Activated CD4-positive, alpha-beta T cell treated with anti-CD3 and anti-CD28 coated beads, Interleukin-2, amount 10 ng/mL, durations not matched to agents 7 days and 5 days (primary cell): ENCODE measurements at regions of chr14 and their contacts with region 1.

Region 1: DNA sequence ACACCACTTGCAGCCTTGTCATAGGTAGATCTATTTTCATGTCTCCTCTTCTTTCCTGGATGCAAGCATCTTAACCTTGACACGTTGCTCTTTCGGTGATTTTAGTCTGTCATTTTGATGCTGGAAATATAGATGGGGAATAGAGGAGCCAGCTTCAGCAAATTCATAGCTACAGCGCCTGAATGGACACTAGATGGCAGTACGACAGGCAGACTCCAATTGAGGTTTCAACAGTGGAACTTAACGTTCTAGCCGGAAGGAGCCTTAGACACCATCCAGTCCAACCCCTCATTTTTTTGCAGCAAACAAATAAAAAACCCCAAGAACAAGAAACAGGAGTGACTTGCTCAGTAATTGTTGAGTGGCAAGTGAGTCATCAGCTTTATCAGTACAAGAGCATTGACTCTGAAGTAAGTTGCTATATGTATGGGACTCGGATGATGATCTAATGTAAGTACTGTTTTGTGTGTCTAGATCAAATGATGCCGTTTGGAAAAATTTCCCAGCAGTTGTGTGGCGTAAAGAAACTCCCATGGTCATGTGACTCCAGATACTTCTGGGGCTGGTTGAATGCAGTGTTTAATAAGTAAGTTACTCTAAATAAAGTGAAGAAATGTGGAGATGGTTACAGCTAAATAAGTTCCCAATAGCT is 9.0 kb downstream of the DMAC2L start:
- DNase-seq: peak; percentile 80
- H3K4me3 Mint-ChIP-seq: no peak overlapping the region
- H3K27ac Mint-ChIP-seq: no peak overlapping the region
- H3K4me1 Mint-ChIP-seq: peaks cover 22% of the 10 kb centered on the region
- H3K27me3 Mint-ChIP-seq: no peaks in the 10 kb centered on the region

Region 2: DNA sequence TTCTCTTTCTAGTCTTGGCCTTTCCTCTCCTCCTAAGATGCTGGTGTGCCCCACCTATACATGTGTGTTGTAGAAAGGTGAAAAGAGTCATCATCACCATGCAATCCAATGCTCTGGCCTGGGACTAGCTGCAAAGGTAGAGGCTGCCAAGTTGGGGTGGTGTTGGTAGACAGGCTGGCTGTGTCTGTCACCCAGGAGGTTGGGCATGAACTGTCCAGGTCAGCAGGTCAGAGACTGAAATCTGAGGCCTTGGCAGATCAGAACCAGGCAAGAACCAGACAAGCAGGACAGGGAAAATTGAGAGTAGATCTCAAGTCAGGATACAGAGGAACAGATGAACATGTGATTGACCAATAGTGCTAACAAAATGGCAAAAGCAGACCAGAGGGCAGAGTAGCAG is 35.3 kb before region 1 on chr14:
- CTCF ChIA-PET with region 1: no interaction called
- POLR2A ChIA-PET with region 1: no interaction called
- DNase-seq: no peak
- H3K4me3 Mint-ChIP-seq: no peak overlapping the region
- H3K27ac Mint-ChIP-seq: no peak overlapping the region
- H3K4me1 Mint-ChIP-seq: no peaks in the 10 kb centered on the region
- H3K27me3 Mint-ChIP-seq: no peaks in the 10 kb centered on the region

Region 3: DNA sequence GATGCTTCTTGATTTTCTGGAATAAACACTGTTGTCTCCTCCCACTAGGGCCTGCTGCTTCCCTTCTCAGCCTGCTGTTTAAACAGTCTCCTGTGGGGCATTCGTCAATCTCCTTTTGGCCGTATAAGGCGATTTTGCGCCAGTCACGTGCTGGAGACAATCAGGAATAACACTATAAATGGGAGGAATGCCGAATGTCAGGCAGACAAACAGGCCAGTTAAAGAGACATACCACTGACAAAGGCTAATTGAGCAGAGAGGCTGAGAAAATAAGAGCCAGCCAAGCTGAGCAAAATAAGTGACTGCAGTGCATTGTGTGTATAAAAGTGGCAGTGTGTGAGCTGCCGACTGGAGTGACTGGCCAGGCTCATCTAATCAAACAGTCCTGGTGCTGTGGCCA is 14.3 kb after region 1 on chr14:
- CTCF ChIA-PET with region 1: interaction called, 10 read pairs
- POLR2A ChIA-PET with region 1: no interaction called
- DNase-seq: no peak
- H3K4me3 Mint-ChIP-seq: no peak overlapping the region
- H3K27ac Mint-ChIP-seq: no peak overlapping the region
- H3K4me1 Mint-ChIP-seq: peaks cover 13% of the 10 kb centered on the region
- H3K27me3 Mint-ChIP-seq: no peaks in the 10 kb centered on the region